ENCODE measurements at regions of chr6 and their contacts with region 1.

Region 1: GRCh38 chr6:136792410-136793262 is at the start of gene MAP3K5:
- DNase-seq: peak; percentile 94
- H3K4me3 ChIP-seq: peak within 1 kb of the TSS; percentile 94
- H3K27ac ChIP-seq: peak within 1 kb of the TSS; percentile 86
- H3K4me1 ChIP-seq: peaks cover 34% of the 10 kb centered on the region
- CTCF ChIP-seq: peak; percentile 83
- total RNA-seq, gene MAP3K5: 12.0 and 13.8 TPM in 2 replicates

Region 2: GRCh38 chr6:136289579-136290409 is 502.8 kb before region 1 on chr6 and contains the start of gene BCLAF1:
- CTCF ChIA-PET with region 1: no interaction called
- POLR2A ChIA-PET with region 1: interaction called, 3 read pairs
- intact Hi-C with region 1: loop called (anchors 10 kb)
- DNase-seq: peak; percentile 99
- H3K4me3 ChIP-seq: peak within 1 kb of the TSS; percentile 88
- H3K27ac ChIP-seq: peak within 1 kb of the TSS; percentile 97
- H3K4me1 ChIP-seq: peaks cover 42% of the 10 kb centered on the region
- CTCF ChIP-seq: peak; percentile 34; the same call in 1 of the 2 replicates
- total RNA-seq, gene BCLAF1: 130 and 228 TPM in 2 replicates

Region 3: GRCh38 chr6:136607932-136608772 is 184.5 kb before region 1 on chr6:
- CTCF ChIA-PET with region 1: interaction called, 3 read pairs
- POLR2A ChIA-PET with region 1: interaction called, 4 read pairs
- intact Hi-C with region 1: loop called (anchors 1 kb)
- DNase-seq: peak; percentile 71
- H3K4me3 ChIP-seq: no peak overlapping the region
- H3K27ac ChIP-seq: no peak overlapping the region
- H3K4me1 ChIP-seq: no peaks in the 10 kb centered on the region
- CTCF ChIP-seq: peak; percentile 87

Region 4: DNA sequence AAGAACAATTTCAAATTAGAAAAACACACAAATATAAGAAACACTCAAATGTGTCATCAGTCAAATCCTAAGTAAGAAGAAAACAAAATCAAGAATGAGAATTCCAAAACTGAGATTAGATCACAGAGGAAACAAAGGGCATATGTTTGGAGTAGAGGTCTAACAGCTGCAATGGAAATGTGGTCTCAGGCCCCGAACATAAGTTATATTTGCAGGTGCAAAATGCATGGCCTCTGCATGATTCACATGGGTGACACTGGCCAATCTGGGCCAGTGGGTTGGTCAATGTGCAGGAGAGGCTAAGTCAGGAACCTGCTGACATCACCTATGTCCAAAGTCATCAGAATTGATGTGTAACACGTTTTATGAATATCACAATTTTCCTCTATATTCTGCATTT is 133.9 kb before region 1 on chr6:
- CTCF ChIA-PET with region 1: interaction called, 10 read pairs
- POLR2A ChIA-PET with region 1: no interaction called
- intact Hi-C with region 1: no loop called
- DNase-seq: no peak
- H3K4me3 ChIP-seq: no peak overlapping the region
- H3K27ac ChIP-seq: no peak overlapping the region
- H3K4me1 ChIP-seq: no peaks in the 10 kb centered on the region
- CTCF ChIP-seq: no peak

Region 5: DNA sequence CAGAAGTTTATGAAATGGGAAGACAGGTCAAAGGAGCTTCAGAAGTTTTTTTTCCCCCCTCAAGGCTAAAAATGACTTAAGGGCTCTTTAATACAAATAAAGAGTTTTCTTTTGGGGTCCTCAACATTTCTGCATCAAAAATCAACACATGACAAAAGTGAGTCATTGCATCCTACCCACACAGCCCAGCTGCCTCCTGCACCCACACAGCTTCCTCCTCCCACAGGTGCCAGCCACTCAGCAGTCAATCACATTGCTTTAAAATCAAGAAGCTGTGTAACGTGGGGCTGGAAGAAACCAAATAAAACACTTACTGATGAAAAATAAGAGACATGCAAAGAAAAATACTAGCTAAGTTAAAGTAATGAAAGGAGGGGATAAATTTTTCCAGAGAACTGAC is 68.9 kb before region 1 on chr6:
- CTCF ChIA-PET with region 1: interaction called, 43 read pairs
- POLR2A ChIA-PET with region 1: interaction called, 156 read pairs
- intact Hi-C with region 1: loop called (anchors 1 kb)
- DNase-seq: peak; percentile 80
- H3K4me3 ChIP-seq: no peak overlapping the region
- H3K27ac ChIP-seq: peak overlapping the region; percentile 58
- H3K4me1 ChIP-seq: peaks cover 51% of the 10 kb centered on the region
- CTCF ChIP-seq: no peak

Region 6: GRCh38 chr6:136751522-136751956 is 41.1 kb before region 1 on chr6:
- CTCF ChIA-PET with region 1: interaction called, 4 read pairs
- POLR2A ChIA-PET with region 1: interaction called, 4 read pairs
- intact Hi-C with region 1: loop called (anchors 5 kb)
- DNase-seq: peak; percentile 56
- H3K4me3 ChIP-seq: peak overlapping the region; percentile 47
- H3K27ac ChIP-seq: peak overlapping the region; percentile 60
- H3K4me1 ChIP-seq: peaks cover 29% of the 10 kb centered on the region
- CTCF ChIP-seq: no peak

Region 7: DNA sequence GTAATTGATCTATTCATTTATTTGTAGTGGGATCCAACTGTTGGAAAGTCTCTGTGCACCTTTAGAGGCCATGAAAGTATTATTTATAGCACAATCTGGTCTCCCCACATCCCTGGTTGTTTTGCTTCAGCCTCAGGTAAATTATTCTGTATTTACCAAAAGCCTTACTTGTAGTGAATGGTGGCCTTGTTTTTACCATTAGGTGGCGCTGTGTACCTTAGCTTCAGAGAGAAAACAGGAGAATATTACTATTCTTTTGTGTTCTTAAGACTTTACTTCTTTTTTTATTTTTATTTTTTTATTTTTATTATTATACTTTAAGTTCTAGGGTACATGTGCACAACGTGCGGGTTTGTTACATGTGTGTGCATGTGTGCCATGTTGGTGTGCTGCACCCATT is 53.4 kb after region 1 on chr6:
- CTCF ChIA-PET with region 1: no interaction called
- POLR2A ChIA-PET with region 1: no interaction called
- intact Hi-C with region 1: no loop called
- DNase-seq: peak; percentile 60
- H3K4me3 ChIP-seq: no peak overlapping the region
- H3K27ac ChIP-seq: no peak overlapping the region
- H3K4me1 ChIP-seq: no peaks in the 10 kb centered on the region
- CTCF ChIP-seq: peak; percentile 81